ENCODE measurements at regions of chr19 and their contacts with region 1.

Region 1: DNA sequence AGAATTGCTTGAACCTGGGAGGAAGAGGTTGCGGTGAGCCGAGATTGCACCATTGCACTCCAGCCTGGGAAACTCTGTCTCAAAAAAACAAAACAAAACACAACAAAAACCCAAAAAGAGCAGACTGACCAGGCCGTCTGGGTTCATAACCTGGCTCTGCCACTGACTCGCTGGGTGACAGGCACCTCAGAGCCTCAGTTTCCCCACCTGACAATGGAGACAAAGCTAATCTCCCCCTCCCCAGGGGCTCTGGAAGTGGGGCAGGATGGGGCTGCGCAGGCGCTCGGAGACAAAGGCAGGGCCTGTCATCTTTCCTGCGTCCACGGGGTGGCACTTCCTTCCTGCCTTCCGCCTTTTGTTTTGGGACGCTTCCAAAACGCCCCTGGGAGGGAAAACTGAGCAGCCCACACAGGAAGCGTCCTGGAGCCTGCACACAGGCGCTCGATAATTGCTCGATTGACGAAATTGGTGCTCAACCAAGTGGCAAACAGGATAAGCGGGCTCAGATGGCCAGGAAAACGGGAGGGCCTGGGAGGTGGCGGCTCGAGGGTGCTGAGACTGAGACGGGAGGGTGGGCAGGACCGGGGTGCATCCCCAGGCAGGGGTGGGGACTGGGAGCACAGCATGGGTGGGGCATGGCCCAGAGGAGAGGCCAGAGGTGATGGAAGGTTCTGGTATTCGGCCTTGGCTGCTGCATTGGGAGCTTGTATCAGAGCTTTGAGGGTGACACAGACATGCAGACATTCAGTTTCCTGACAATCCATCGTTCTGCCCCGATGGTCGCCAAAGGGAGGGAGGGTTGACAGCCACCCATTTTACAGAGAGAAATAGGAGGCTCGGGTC is 17.8 kb downstream of the SPC24 start:
- DNase-seq: peak; percentile 85
- ATAC-seq: peak; percentile 60

Region 2: GRCh38 chr19:11069561-11069960 is 68.2 kb before region 1 on chr19:
- intact Hi-C with region 1: no loop called
- DNase-seq: no peak
- ATAC-seq: no peak

Region 3: GRCh38 chr19:11203194-11204075 is 65.7 kb after region 1 on chr19:
- intact Hi-C with region 1: loop called (anchors 5 kb)
- DNase-seq: peak; percentile 87
- ATAC-seq: peak; percentile 80

Measured in left ventricle myocardium superior (tissue), 1 donor.